Activated CD4-positive, alpha-beta T cell treated with anti-CD3 and anti-CD28 coated beads for 36 hours (primary cell): ENCODE measurements at regions of chr10 and their contacts with region 1.

Region 1: DNA sequence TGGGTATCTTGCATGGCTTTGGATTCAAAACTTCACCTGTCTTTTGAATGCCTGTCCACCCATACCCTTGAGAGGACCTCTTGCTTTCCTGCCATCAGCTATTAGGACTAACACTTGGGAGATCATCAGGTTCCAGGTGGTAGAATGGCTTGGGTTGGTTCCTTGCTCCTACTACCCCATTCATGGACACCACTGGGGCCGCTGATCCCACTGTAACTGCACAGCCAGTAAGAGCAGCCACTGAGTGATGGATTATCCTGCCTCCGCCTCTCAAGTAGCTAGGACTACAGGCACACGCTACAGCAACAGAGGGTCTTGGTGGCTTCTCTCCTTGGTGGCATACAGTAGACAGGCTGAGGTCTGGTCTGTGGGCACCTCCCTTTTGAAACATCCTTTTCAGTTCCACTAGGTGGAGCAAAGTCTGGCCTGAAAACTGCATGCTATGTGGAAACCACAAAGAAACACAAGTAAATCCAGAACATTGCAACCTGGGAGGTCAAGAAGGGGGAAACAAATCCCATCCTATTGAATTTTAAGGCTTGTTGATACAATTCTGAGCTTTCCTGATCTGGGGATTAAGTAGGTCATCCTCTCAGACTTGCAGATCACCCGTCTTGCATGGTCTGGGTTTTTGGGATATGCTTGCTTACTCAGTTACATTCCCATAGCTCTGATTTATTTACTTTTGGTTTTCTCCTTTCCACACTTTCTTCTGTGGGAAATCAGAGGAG is 9.4 kb downstream of the WBP1L start:
- DNase-seq: peak; percentile 35
- ATAC-seq: peak; percentile 78
- H3K4me3 Mint-ChIP-seq: no peak overlapping the region
- H3K27ac Mint-ChIP-seq: no peak overlapping the region
- H3K4me1 Mint-ChIP-seq: peaks cover 45% of the 10 kb centered on the region
- H3K27me3 Mint-ChIP-seq: no peaks in the 10 kb centered on the region

Region 2: GRCh38 chr10:102764389-102765178 is 11.5 kb after region 1 on chr10:
- CTCF ChIA-PET with region 1: interaction called, 18 read pairs
- POLR2A ChIA-PET with region 1: no interaction called
- intact Hi-C with region 1: no loop called
- DNase-seq: no peak
- ATAC-seq: no peak
- H3K4me3 Mint-ChIP-seq: no peak overlapping the region
- H3K27ac Mint-ChIP-seq: no peak overlapping the region
- H3K4me1 Mint-ChIP-seq: peaks cover 41% of the 10 kb centered on the region
- H3K27me3 Mint-ChIP-seq: no peaks in the 10 kb centered on the region

Region 3: DNA sequence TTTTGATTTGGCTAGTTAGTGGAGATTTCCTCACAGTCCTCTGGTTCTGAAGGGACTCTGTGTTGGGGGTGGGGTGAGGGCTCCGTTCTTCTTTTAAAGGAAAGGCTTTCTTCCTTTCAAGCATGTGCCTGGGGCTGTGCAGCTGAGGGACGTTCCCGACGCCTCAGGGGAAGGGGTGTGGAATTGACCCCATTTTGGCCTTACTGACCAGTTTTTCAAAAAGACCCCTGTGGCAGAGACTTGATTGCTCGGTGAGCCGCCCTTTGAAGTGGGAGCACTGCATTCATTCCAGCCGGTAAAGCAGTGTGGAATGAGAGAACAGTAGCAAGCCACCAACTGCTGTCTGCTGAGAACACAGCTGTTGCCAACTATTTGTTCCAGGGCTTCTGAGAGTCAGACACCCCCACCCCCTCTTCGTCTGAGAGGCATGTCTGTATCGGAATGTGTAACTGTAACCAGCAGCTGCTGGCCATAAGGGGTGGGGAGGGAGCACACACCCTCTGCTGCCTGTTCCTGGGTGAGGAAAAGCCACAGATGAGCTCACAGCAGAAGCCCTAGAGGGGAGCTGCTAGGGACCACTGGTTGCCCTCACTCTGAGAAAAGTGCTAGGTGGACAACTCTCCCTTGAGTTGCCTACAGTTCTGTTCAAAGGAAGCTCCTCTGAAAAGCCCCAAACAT is 23.8 kb after region 1 on chr10:
- CTCF ChIA-PET with region 1: interaction called, 26 read pairs
- POLR2A ChIA-PET with region 1: interaction called, 6 read pairs
- intact Hi-C with region 1: no loop called
- DNase-seq: peak; percentile 61
- ATAC-seq: peak; percentile 55
- H3K4me3 Mint-ChIP-seq: peak overlapping the region; percentile 29
- H3K27ac Mint-ChIP-seq: no peak overlapping the region
- H3K4me1 Mint-ChIP-seq: peaks cover 59% of the 10 kb centered on the region
- H3K27me3 Mint-ChIP-seq: no peaks in the 10 kb centered on the region

Region 4: GRCh38 chr10:102904346-102904745 is 151.2 kb after region 1 on chr10:
- CTCF ChIA-PET with region 1: interaction called, 15 read pairs
- POLR2A ChIA-PET with region 1: no interaction called
- intact Hi-C with region 1: no loop called
- DNase-seq: no peak
- ATAC-seq: no peak
- H3K4me3 Mint-ChIP-seq: no peak overlapping the region
- H3K27ac Mint-ChIP-seq: no peak overlapping the region
- H3K4me1 Mint-ChIP-seq: no peaks in the 10 kb centered on the region
- H3K27me3 Mint-ChIP-seq: no peaks in the 10 kb centered on the region

Region 5: GRCh38 chr10:103481974-103482531 is 729.0 kb after region 1 on chr10:
- CTCF ChIA-PET with region 1: no interaction called
- POLR2A ChIA-PET with region 1: no interaction called
- intact Hi-C with region 1: no loop called
- DNase-seq: no peak
- ATAC-seq: peak; percentile 69
- H3K4me3 Mint-ChIP-seq: no peak overlapping the region
- H3K27ac Mint-ChIP-seq: no peak overlapping the region
- H3K4me1 Mint-ChIP-seq: no peaks in the 10 kb centered on the region
- H3K27me3 Mint-ChIP-seq: no peaks in the 10 kb centered on the region